ENCODE measurements at regions of chrX and their contacts with region 1.

Region 1: DNA sequence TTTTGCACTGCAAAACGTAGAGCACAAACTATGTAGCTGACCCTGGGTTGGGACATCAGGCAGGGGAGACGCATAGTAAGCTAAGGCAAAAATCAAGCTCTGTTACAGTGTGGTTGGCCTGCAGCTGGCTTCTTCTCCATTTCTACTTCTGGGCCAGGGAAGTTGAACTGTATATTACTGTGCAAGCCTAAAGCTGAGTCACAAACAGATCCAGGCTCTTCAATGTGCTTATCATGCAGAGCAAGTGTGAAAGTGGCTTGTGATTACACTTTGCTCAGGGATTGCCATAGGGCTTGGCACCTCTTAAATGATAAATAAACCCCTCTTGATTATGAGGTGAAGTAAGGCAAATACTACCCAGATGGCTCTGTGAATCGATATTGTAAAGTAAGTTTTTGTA is 40.5 kb downstream of the CLDN34 start:
- DNase-seq: no peak
- H3K4me3 ChIP-seq: no peak overlapping the region
- H3K4me3 Mint-ChIP-seq: no peak overlapping the region
- H3K27ac Mint-ChIP-seq: no peak overlapping the region
- H3K4me1 ChIP-seq: peaks cover 40% of the 10 kb centered on the region
- H3K4me1 Mint-ChIP-seq: peaks cover 34% of the 10 kb centered on the region
- H3K27me3 ChIP-seq: no peaks in the 10 kb centered on the region
- H3K27me3 Mint-ChIP-seq: no peaks in the 10 kb centered on the region
- CTCF ChIP-seq: no peak

Region 2: GRCh38 chrX:9429781-9430180 is 577.8 kb before region 1 on chrX:
- CTCF ChIA-PET with region 1: no interaction called
- POLR2A ChIA-PET with region 1: no interaction called
- intact Hi-C with region 1: no loop called
- DNase-seq: no peak
- H3K4me3 ChIP-seq: no peak overlapping the region
- H3K4me3 Mint-ChIP-seq: no peak overlapping the region
- H3K27ac Mint-ChIP-seq: no peak overlapping the region
- H3K4me1 ChIP-seq: no peaks in the 10 kb centered on the region
- H3K4me1 Mint-ChIP-seq: no peaks in the 10 kb centered on the region
- H3K27me3 ChIP-seq: no peaks in the 10 kb centered on the region
- H3K27me3 Mint-ChIP-seq: no peaks in the 10 kb centered on the region
- CTCF ChIP-seq: no peak

Region 3: DNA sequence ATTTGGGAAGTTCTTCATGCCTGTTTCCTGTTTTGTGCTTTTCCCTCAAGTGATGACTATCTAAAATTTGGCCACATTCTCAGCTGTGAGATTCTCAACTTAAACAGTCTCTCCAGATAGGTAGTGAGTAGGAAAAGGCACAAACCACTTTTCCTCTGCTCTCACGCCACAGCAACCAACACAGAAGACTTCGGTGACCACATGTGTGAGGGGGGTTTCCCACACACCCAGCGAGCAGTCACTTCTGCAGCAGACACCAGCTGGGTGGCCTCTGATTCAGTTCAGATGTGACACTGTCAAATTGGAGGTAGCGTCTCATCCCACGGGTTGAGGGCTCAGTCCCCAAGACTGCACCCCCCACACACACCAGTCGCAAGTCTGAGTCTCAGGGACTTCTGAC is 65.5 kb before region 1 on chrX:
- CTCF ChIA-PET with region 1: no interaction called
- POLR2A ChIA-PET with region 1: no interaction called
- intact Hi-C with region 1: no loop called
- DNase-seq: no peak
- H3K4me3 ChIP-seq: no peak overlapping the region
- H3K4me3 Mint-ChIP-seq: no peak overlapping the region
- H3K27ac Mint-ChIP-seq: no peak overlapping the region
- H3K4me1 ChIP-seq: no peaks in the 10 kb centered on the region
- H3K4me1 Mint-ChIP-seq: no peaks in the 10 kb centered on the region
- H3K27me3 ChIP-seq: no peaks in the 10 kb centered on the region
- H3K27me3 Mint-ChIP-seq: no peaks in the 10 kb centered on the region
- CTCF ChIP-seq: no peak

Region 4: GRCh38 chrX:10310511-10310910 is 302.9 kb after region 1 on chrX:
- CTCF ChIA-PET with region 1: no interaction called
- POLR2A ChIA-PET with region 1: no interaction called
- intact Hi-C with region 1: loop called (anchors 10 kb)
- DNase-seq: no peak
- H3K4me3 ChIP-seq: no peak overlapping the region
- H3K4me3 Mint-ChIP-seq: no peak overlapping the region
- H3K27ac Mint-ChIP-seq: no peak overlapping the region
- H3K4me1 ChIP-seq: peaks cover 16% of the 10 kb centered on the region
- H3K4me1 Mint-ChIP-seq: peaks cover 7% of the 10 kb centered on the region
- H3K27me3 ChIP-seq: no peaks in the 10 kb centered on the region
- H3K27me3 Mint-ChIP-seq: no peaks in the 10 kb centered on the region
- CTCF ChIP-seq: no peak